Dendritic cell treated with granulocyte-macrophage colony-stimulating factor and Interleukin-4, amounts not matched to agents 40 ng/mL and 50 ng/mL, for 4 days (primary cell): ENCODE measurements at regions of chr16 and their contacts with region 1.

Region 1: GRCh38 chr16:67226804-67227557 is at the start of gene TMEM208:
- H3K4me3 Mint-ChIP-seq: peak within 1 kb of the TSS; percentile 96
- H3K27ac Mint-ChIP-seq: peak within 1 kb of the TSS; percentile 91
- H3K4me1 Mint-ChIP-seq: peaks cover 61% of the 10 kb centered on the region
- H3K27me3 Mint-ChIP-seq: no peaks in the 10 kb centered on the region

Region 2: DNA sequence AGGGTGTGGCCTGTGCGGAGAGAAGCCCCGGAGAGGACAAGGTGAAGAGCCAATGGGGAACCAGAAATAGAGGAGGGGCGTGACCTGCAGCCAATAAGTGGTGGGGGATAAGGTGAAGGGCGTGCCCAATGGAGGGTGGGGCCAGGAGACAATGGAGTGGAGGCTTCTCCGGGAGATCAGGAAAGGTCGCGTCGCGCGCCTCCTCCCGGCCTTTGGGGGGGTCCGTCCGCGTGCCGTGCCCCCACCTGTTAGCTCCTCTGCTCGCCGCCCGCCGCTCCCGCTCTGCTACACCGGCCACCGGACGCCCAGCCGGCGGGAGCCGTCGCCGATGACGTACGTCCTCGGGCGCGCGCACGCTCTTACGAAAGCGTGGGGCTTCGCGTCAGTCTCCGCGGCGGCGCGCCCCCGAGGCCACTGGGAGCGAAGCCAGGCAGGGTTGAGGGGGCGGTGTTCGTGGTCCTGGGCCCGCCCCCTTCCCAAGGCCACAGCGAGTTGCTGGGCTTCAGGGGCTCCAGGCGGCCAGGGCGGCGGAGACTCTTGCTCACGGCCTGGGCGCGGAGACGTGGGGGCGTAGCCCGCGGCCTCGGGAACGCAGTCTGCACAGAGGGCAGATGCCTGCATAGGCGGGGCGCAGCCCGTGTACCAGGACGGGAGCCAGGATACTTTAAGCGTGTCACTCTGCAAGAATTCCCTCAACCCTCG is 43.2 kb before region 1 on chr16 and contains the start of gene MATCAP1:
- intact Hi-C with region 1: loop called (anchors 2 kb)
- H3K4me3 Mint-ChIP-seq: no peak within 1 kb of the TSS
- H3K27ac Mint-ChIP-seq: no peak within 1 kb of the TSS
- H3K4me1 Mint-ChIP-seq: peaks cover 18% of the 10 kb centered on the region
- H3K27me3 Mint-ChIP-seq: peaks cover 32% of the 10 kb centered on the region

Region 3: GRCh38 chr16:67191995-67192681 is 34.8 kb before region 1 on chr16 and contains the start of gene E2F4:
- intact Hi-C with region 1: loop called (anchors 2 kb)
- H3K4me3 Mint-ChIP-seq: peak within 1 kb of the TSS; percentile 83
- H3K27ac Mint-ChIP-seq: peak within 1 kb of the TSS; percentile 79
- H3K4me1 Mint-ChIP-seq: peaks cover 50% of the 10 kb centered on the region
- H3K27me3 Mint-ChIP-seq: peaks cover under 1% of the 10 kb centered on the region

Region 4: GRCh38 chr16:67246934-67247697 is 20.1 kb after region 1 on chr16 and contains the start of gene FHOD1:
- intact Hi-C with region 1: loop called (anchors 1 kb)
- H3K4me3 Mint-ChIP-seq: peak within 1 kb of the TSS; percentile 89
- H3K27ac Mint-ChIP-seq: peak within 1 kb of the TSS; percentile 88
- H3K4me1 Mint-ChIP-seq: peaks cover 63% of the 10 kb centered on the region
- H3K27me3 Mint-ChIP-seq: peaks cover 38% of the 10 kb centered on the region